ENCODE measurements at regions of chr3 and their contacts with region 1.

Region 1: DNA sequence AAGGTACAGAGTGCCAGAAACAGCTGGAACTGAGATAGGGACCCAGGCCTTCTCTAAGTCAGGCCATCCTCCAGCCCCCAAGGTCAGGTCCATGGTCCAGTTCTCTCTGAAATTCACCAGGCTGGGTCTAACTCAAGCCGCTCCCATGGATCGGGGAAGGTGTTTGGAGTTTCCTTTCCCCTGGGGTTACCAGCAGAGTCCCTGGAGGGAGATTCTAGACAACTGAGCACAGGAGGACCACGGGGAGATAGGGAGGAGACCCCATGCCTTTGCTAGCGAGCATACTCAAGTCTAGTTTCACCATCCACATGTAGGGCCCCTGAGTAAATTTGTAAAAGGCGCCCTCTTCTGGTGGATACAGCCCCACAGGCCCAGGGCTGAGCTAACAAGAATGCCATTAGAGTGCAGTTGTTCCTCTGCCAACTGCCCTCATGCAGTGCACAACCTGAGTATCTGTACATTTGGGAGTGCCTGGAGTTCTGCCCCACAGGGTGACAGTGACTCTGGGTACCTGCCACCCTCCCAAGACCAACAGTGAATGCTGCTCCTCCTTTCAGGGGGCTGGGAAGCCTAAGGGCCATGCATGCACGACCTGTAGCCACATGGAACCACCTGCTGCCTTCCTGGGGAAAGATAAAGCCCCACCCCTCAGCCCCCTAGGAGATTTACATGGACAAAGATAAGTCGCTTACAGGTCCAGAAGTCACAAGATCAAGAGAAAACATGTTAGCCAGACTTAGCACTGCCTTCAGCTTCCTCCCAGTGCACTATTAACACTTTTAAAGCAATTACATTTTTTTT is 89.0 kb downstream of the IQSEC1 start:
- DNase-seq: peak; percentile 79
- ATAC-seq: peak; percentile 66
- H3K4me3 ChIP-seq: no peak overlapping the region
- H3K4me3 Mint-ChIP-seq: no peak overlapping the region
- H3K27ac ChIP-seq: peak overlapping the region in 1 of 2 donors; percentile 63
- H3K27ac Mint-ChIP-seq: peak overlapping the region; percentile 73
- H3K4me1 ChIP-seq: peaks cover 54 to 69% of the 10 kb centered on the region in 2 donors
- H3K4me1 Mint-ChIP-seq: peaks cover 69% of the 10 kb centered on the region
- H3K27me3 ChIP-seq: no peaks in the 10 kb centered on the region
- H3K27me3 Mint-ChIP-seq: no peaks in the 10 kb centered on the region
- CTCF ChIP-seq: peak; percentile 74

Region 2: DNA sequence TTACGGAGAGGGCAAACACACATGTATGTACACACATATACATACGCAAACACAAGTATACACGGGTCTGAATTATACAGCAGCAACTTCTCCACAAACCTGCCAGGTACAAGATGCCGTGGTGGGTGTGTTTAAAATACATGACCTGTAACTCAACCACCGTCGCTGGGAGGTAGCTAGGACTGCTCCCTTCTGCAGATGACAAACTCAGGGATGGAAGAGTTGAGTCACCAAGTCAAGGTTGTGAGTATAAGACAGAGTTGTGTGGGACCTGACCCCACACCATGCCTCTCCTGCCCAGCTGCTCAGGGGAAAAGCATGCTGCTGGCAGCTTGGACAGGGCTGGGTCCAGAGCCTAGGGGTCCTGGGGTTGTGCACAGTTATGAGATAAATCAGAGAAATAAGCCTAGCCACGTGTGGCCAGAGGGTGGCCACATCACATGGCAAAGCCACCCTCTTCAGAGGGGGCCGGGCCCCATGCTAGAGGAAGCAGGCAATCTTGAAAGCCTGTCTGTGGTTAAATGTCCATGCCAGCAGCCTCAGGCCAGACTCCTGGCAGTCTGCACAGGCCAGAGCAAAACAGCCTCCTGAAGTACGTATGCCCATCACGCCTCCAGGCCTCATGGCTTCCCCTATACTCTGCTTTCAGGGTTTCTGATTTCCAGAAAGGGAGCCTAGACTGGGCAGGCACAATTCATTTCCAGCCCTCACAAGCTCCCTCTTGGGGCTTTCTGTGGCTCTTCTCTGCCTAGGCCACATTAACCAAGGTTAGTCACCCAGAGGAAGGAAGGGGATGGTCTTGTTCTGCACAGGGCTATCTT is 35.1 kb before region 1 on chr3:
- CTCF ChIA-PET with region 1: interaction called, 5 read pairs
- POLR2A ChIA-PET with region 1: no interaction called
- intact Hi-C with region 1: loop called (anchors 5 kb)
- DNase-seq: no peak
- ATAC-seq: peak; percentile 63
- H3K4me3 ChIP-seq: no peak overlapping the region
- H3K4me3 Mint-ChIP-seq: peak overlapping the region; percentile 37
- H3K27ac ChIP-seq: peak overlapping the region in 1 of 2 donors; percentile 3
- H3K27ac Mint-ChIP-seq: peak overlapping the region; percentile 75
- H3K4me1 ChIP-seq: peaks cover 30 to 70% of the 10 kb centered on the region in 2 donors
- H3K4me1 Mint-ChIP-seq: peaks cover 66% of the 10 kb centered on the region
- H3K27me3 ChIP-seq: no peaks in the 10 kb centered on the region
- H3K27me3 Mint-ChIP-seq: no peaks in the 10 kb centered on the region
- CTCF ChIP-seq: no peak

Region 3: DNA sequence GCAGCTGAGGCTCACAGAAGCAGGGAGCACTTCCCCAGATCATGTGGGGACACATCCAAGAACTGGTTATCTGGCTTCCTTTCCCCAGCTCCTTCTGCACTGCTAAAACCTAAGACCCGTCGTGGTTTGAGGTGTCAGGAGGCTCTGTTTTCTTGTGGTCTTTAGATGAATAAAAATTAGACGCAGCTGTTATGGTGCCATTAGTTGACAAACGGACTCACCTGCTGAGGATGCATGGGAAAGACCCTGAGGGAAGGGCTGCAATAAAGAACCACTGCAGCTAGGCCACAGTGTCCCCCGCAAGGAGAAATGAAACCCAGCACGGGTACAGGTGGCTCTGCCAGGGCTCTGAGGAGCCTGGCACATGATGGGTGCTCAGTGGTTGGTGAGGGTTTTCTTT is 10.4 kb before region 1 on chr3:
- CTCF ChIA-PET with region 1: interaction called, 29 read pairs
- POLR2A ChIA-PET with region 1: no interaction called
- intact Hi-C with region 1: no loop called
- DNase-seq: peak; percentile 75
- ATAC-seq: peak; percentile 62
- H3K4me3 ChIP-seq: no peak overlapping the region
- H3K4me3 Mint-ChIP-seq: no peak overlapping the region
- H3K27ac ChIP-seq: peak overlapping the region in 1 of 2 donors; percentile 49
- H3K27ac Mint-ChIP-seq: peak overlapping the region; percentile 76
- H3K4me1 ChIP-seq: peaks cover 22 to 62% of the 10 kb centered on the region in 2 donors
- H3K4me1 Mint-ChIP-seq: peaks cover 72% of the 10 kb centered on the region
- H3K27me3 ChIP-seq: no peaks in the 10 kb centered on the region
- H3K27me3 Mint-ChIP-seq: no peaks in the 10 kb centered on the region
- CTCF ChIP-seq: no peak

Region 4: GRCh38 chr3:13002398-13003124 is 18.3 kb after region 1 on chr3:
- CTCF ChIA-PET with region 1: interaction called, 69 read pairs
- POLR2A ChIA-PET with region 1: no interaction called
- intact Hi-C with region 1: no loop called
- DNase-seq: peak; percentile 84
- ATAC-seq: peak; percentile 65
- H3K4me3 ChIP-seq: peak overlapping the region in 2 of 5 experiments; percentile 5 to 35
- H3K4me3 Mint-ChIP-seq: peak overlapping the region; percentile 73
- H3K27ac ChIP-seq: peak overlapping the region; percentile 77 to 97
- H3K27ac Mint-ChIP-seq: peak overlapping the region; percentile 93
- H3K4me1 ChIP-seq: peaks cover 90 to 95% of the 10 kb centered on the region in 2 donors
- H3K4me1 Mint-ChIP-seq: peaks cover 93% of the 10 kb centered on the region
- H3K27me3 ChIP-seq: no peaks in the 10 kb centered on the region
- H3K27me3 Mint-ChIP-seq: no peaks in the 10 kb centered on the region
- CTCF ChIP-seq: no peak

Region 5: DNA sequence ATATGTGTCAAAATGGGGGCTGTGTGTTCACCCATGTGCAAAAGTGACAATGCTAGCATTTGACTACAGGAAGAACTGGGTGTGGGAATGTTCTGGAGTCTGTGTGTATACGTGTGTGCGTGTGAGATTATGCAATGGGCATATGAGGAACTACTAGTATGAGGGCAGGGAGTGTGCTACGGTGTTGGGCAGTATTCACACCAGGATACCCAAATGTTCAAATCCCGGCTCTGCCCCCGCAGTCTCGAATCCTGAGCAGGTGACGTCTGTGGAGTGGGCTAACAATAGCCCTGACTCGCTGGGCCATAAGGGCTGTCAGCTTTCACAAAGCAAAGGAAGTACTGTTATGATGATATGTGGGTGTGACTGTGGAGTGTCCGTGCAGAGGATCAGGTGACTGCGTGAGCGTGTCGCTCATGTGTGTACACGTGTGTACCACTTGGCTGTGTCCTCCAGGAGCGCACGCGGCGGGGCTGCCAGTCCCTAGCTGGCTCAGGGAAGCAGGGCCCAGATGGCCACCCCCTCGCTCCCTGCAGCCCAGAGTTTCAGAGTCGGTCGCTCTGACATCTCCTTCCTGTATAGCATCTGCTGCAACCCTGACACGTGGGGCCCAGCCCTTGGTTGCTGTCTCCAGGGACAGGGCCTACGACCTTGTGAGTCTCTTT is 61.8 kb after region 1 on chr3:
- CTCF ChIA-PET with region 1: interaction called, 21 read pairs
- POLR2A ChIA-PET with region 1: no interaction called
- intact Hi-C with region 1: no loop called
- DNase-seq: peak; percentile 90
- ATAC-seq: peak; percentile 92
- H3K4me3 ChIP-seq: peak overlapping the region in 2 of 5 experiments; percentile 26 to 42
- H3K4me3 Mint-ChIP-seq: peak overlapping the region; percentile 90
- H3K27ac ChIP-seq: peak overlapping the region; percentile 89
- H3K27ac Mint-ChIP-seq: peak overlapping the region; percentile 87
- H3K4me1 ChIP-seq: peaks cover 63 to 71% of the 10 kb centered on the region in 2 donors
- H3K4me1 Mint-ChIP-seq: peaks cover 70% of the 10 kb centered on the region
- H3K27me3 ChIP-seq: no peaks in the 10 kb centered on the region
- H3K27me3 Mint-ChIP-seq: no peaks in the 10 kb centered on the region
- CTCF ChIP-seq: no peak

Region 6: DNA sequence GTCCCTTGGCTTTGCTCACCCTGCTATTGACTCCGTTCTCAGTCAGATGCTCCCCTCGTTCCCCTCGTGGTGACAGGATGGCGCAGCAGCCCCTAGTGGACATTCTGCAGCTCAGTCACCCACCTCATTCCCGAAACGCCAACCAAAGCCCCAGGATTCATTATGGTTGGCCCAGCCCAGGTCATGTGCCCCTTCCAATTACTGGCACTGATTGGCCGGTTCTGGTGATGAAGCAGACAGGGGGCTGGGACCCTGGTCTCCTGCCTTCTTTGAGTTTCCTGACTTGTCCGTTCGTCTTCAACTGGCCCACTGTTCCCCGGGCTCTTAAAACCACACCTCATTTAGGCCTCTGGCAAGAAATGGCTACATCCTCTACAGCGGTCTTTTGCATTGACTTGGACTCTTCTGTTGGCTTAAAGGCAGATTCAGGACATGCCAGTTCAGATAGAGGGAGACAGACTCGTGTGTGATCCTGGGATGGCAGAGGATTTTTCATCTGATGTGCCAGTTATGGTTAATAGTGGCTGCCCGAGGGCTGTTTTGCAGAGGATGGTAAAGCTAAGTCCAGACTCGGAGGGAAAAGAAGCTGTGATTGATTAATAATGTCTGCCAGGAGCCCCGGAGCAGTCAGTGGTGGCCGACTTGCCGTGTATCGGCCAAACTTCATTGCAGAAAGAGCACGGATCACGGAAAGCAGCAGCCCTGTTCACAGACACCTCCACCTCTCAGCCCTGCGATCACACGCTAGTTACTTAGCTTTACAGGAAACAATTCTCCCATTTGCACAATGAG is 1232.2 kb after region 1 on chr3:
- CTCF ChIA-PET with region 1: no interaction called
- POLR2A ChIA-PET with region 1: no interaction called
- intact Hi-C with region 1: no loop called
- DNase-seq: peak; percentile 41
- ATAC-seq: peak; percentile 57
- H3K4me3 ChIP-seq: peak overlapping the region in 4 of 5 experiments; percentile 42 to 54 (median 45)
- H3K4me3 Mint-ChIP-seq: peak overlapping the region; percentile 20
- H3K27ac ChIP-seq: peak overlapping the region in 1 of 2 donors; percentile 33
- H3K27ac Mint-ChIP-seq: no peak overlapping the region
- H3K4me1 ChIP-seq: no peaks in the 10 kb centered on the region
- H3K4me1 Mint-ChIP-seq: no peaks in the 10 kb centered on the region
- H3K27me3 ChIP-seq: no peaks in the 10 kb centered on the region
- H3K27me3 Mint-ChIP-seq: no peaks in the 10 kb centered on the region
- CTCF ChIP-seq: no peak